ENCODE measurements at regions of chr19 and their contacts with region 1.

Region 1: DNA sequence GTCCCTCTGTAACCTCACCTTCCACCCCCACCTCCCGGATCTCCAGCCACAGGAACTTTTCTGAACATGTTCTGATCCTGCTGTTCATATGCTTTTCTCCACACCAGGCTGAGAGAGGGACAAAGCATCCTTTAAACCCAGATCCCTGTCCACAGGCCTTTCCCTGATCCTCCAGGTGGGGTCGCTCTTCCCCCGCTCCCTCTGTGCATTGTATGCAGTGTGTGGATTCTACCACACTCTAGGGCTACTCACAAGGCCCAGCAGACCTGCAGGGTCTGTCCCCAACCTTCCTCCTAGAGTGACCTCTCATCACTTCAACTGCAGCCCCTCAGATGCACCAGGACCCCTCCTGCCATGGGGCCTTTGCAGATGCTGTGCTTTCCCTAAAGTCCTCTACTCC is 1200.6 kb downstream of the UQCRFS1 start:
- DNase-seq: no peak
- CTCF ChIP-seq: peak; percentile 34

Region 2: GRCh38 chr19:28074737-28075136 is 62.4 kb after region 1 on chr19:
- CTCF ChIA-PET with region 1: interaction called, 15 read pairs
- POLR2A ChIA-PET with region 1: no interaction called
- DNase-seq: peak; percentile 50
- CTCF ChIP-seq: no peak

Region 3: DNA sequence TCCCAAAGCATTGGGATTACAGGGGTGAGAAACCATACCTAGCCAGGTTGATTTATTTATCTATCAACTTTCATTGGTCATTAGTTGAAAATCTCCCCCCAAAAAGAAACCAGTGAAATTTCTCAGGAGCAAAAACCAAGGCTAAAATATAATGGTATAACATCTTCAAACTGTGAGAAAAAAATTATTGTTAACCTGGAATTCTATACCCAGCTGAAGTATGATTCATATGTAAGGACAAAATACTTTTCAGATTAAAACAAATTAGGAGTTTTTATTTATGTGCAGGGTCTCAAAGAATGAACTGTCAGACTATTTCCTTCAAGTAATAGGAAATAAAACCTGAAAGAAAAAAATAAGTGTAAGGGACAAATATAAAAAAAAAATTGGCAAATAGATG is 146.7 kb after region 1 on chr19:
- CTCF ChIA-PET with region 1: no interaction called
- POLR2A ChIA-PET with region 1: no interaction called
- DNase-seq: no peak
- CTCF ChIP-seq: no peak

Region 4: DNA sequence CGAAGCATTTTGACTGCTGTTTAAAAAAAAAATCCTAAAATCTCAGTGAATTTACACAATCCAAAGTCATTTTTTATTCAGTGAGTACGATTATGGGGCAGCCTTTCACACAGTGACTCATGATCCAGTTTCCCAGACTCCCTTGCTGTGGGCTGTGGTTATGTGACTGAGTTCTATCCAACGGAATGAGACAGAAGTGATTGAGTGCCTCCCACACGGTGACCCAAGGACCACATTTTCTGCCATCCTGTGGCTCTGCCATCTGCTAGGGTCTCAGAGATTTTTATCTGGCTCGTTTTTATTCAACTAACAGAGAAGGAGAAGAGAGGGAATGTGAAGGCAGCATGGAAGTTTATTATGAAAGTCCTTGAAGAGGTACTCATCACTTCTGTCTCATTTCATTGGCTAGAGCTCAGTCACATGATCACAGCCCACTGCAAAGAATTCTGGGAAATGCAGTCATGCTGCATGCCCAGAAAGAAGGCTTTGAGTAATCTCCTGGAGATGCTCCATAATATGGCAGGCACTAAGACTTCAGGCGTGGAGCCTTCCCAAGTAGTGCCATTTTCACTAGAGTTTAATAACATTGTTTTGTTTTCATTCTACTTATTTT is 201.2 kb after region 1 on chr19:
- CTCF ChIA-PET with region 1: interaction called, 21 read pairs
- POLR2A ChIA-PET with region 1: no interaction called
- DNase-seq: no peak
- CTCF ChIP-seq: no peak